CD4-positive, alpha-beta T cell (primary cell): ENCODE measurements at regions of chr16 and their contacts with region 1.

Region 1: GRCh38 chr16:29995911-29996772 is at the start of gene INO80E:
- DNase-seq: peak; percentile 97 to 100 (median 99)
- ATAC-seq: peak; percentile 95
- H3K4me3 ChIP-seq: peak within 1 kb of the TSS; percentile 83
- H3K4me3 Mint-ChIP-seq: peak within 1 kb of the TSS; percentile 98
- H3K27ac ChIP-seq: peak within 1 kb of the TSS; percentile 98
- H3K27ac Mint-ChIP-seq: peak within 1 kb of the TSS; percentile 99
- H3K4me1 ChIP-seq: peaks cover 30% of the 10 kb centered on the region
- H3K4me1 Mint-ChIP-seq: peaks cover 33% of the 10 kb centered on the region
- H3K27me3 ChIP-seq: no peaks in the 10 kb centered on the region
- H3K27me3 Mint-ChIP-seq: no peaks in the 10 kb centered on the region
- CTCF ChIP-seq: no peak
- total RNA-seq, gene INO80E: 54.6 to 57.6 TPM

Region 2: DNA sequence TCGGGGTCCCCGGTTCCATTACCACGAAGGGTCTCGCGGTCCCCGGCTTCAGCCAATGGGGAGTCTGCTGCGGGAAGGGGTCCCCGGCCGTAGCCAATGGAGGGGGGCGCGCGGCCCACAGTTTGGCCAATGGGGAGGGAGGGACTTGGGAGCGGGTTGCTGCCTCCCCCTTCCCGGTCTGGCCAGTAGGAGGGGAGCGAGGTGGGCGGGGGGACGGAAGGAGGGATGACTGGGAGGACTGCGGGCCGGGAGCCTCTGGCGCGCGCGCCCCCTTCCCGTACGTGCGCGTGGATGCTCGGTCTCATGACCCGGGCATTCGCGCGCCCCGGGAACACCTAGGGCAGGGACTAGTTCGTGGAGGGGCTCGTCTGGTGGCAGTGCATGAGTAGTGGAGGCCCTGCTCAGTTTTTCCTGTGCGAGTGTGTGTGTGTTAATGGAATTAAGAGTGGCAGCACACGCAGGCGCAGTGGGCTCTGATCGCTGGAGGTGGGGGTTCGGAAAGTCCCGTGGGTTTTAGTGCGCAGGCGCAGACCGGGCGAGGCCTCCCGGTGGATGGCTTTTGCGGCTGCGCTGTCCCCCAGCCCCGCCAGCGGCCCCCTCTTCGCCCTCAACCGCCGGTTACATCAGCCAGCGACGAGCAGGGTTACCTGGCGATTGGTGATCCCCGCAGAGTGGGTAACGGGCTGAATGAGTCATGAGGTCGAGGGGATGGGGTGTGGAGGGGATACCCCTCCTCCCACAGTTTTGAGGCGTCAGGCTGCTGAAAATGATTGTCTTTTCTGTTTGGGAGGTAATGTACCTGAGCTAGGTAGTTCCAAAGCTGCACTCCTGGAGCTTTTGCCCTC is 1172.0 kb before region 1 on chr16:
- CTCF ChIA-PET with region 1: no interaction called
- POLR2A ChIA-PET with region 1: no interaction called
- intact Hi-C with region 1: loop called in 1 of 2 experiments (anchors 10 kb)
- DNase-seq: peak; percentile 88 to 98 (median 94)
- ATAC-seq: peak; percentile 60
- H3K4me3 ChIP-seq: peak overlapping the region; percentile 90
- H3K4me3 Mint-ChIP-seq: peak overlapping the region; percentile 100
- H3K27ac ChIP-seq: peak overlapping the region; percentile 95 to 98
- H3K27ac Mint-ChIP-seq: peak overlapping the region; percentile 99
- H3K4me1 ChIP-seq: peaks cover 31% of the 10 kb centered on the region
- H3K4me1 Mint-ChIP-seq: peaks cover 50% of the 10 kb centered on the region
- H3K27me3 ChIP-seq: no peaks in the 10 kb centered on the region
- H3K27me3 Mint-ChIP-seq: no peaks in the 10 kb centered on the region
- CTCF ChIP-seq: peak; percentile 13

Region 3: DNA sequence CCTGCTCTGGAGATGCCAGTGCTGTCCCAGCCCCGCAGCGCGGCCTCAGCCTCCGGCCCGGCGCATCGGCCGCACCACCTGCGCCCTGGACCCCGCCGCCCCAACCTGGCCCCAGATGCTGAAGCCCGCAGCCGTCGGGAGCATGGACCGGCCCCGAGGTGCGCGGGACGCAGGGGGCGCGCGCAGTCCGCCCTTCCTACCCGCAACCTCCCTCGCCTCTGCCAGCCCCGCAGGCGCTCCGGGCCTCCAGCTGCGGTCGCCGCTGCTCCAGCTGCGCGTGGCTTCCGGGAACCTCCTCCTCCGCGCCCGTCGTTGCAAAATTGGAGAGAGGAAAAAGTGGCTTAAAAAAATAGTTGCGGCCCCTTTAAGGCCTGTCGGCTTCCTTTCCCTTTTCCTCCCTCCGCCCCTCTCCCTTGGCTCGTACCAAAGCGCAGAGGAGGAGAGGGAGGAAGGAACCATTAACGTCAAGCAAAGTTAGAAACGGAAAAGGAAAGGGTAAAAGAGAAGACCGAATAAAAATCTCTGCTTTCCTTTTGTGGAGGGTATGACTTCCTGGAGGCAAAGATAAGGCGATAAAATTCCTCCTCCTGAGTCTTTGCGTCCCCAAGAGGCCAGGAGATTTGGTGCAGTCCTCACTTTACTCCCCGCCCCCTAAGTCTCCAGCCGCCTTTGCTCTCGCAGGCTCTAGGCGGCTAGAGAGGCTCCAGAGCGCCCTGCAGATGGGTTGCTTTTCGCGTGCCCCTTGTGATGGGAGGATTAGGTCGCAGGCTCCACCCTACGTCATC is 133.1 kb before region 1 on chr16 and contains the start of gene CDIPT:
- CTCF ChIA-PET with region 1: no interaction called
- POLR2A ChIA-PET with region 1: no interaction called
- intact Hi-C with region 1: loop called (anchors 1 to 5 kb)
- DNase-seq: peak; percentile 85 to 98 (median 90)
- ATAC-seq: peak; percentile 96
- H3K4me3 ChIP-seq: peak within 1 kb of the TSS; percentile 76
- H3K4me3 Mint-ChIP-seq: peak within 1 kb of the TSS; percentile 95
- H3K27ac ChIP-seq: peak within 1 kb of the TSS; percentile 87 to 97
- H3K27ac Mint-ChIP-seq: peak within 1 kb of the TSS; percentile 95
- H3K4me1 ChIP-seq: peaks cover 30% of the 10 kb centered on the region
- H3K4me1 Mint-ChIP-seq: peaks cover 22% of the 10 kb centered on the region
- H3K27me3 ChIP-seq: no peaks in the 10 kb centered on the region
- H3K27me3 Mint-ChIP-seq: no peaks in the 10 kb centered on the region
- CTCF ChIP-seq: peak; percentile 70
- total RNA-seq, gene CDIPT: 25.7 to 27.0 TPM

Region 4: GRCh38 chr16:29926005-29926710 is 70.0 kb before region 1 on chr16 and contains the start of gene KCTD13:
- CTCF ChIA-PET with region 1: no interaction called
- POLR2A ChIA-PET with region 1: interaction called, 18 read pairs
- intact Hi-C with region 1: loop called (anchors 2 kb)
- DNase-seq: peak; percentile 75 to 94 (median 86)
- ATAC-seq: peak; percentile 89
- H3K4me3 ChIP-seq: peak within 1 kb of the TSS; percentile 74
- H3K4me3 Mint-ChIP-seq: peak within 1 kb of the TSS; percentile 95
- H3K27ac ChIP-seq: peak within 1 kb of the TSS; percentile 42 to 72
- H3K27ac Mint-ChIP-seq: peak within 1 kb of the TSS; percentile 93
- H3K4me1 ChIP-seq: peaks cover 30% of the 10 kb centered on the region
- H3K4me1 Mint-ChIP-seq: peaks cover 38% of the 10 kb centered on the region
- H3K27me3 ChIP-seq: no peaks in the 10 kb centered on the region
- H3K27me3 Mint-ChIP-seq: no peaks in the 10 kb centered on the region
- CTCF ChIP-seq: no peak
- total RNA-seq, gene KCTD13: 40.0 to 43.8 TPM

Region 5: DNA sequence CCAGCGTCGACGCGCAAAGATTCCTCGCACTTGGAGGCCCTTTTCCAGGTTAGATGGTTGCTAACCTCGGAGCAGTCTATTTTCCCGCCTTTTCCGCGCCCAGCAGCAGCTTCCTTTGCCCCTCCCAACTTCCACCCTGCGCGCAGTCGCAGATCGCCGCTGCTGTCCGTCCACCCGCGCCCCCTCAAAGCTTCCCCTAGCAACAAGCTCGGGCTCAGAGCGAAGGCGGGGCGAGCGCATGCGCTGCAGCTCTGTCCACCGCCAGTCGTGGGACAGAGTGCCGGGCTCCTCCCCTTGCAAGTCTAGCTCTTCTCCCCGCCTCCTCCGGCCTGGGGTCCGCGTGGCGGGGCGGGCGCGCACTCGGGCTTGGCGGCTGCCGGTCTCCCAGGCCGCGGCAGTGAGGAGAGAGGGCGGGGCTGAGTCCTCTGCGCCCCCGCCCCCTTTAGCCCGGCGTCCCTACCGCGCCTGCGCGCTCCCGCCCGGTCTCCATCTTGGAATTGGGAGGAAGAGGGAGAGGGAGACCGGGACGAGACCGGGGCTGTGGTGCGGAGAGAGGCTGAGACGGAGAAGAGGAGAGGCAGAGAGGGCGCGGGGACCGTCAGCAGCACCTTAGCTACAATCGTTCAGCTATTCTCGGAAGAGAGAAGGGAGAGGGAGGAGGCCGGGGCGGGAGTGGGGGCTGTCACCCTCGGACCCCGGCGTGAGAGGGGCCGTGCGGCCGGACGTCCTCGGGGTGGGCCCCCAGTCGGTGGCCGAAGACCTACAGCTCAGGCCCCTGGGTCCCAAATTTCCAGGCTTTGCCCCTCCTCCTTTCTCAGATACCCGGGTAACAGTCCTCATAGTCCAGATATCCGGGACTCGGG is 22.5 kb before region 1 on chr16 and contains the start of gene TAOK2:
- CTCF ChIA-PET with region 1: no interaction called
- POLR2A ChIA-PET with region 1: interaction called, 18 read pairs
- intact Hi-C with region 1: loop called (anchors 1 kb)
- DNase-seq: peak; percentile 76 to 98 (median 90)
- ATAC-seq: peak; percentile 87
- H3K4me3 ChIP-seq: peak within 1 kb of the TSS; percentile 99
- H3K4me3 Mint-ChIP-seq: peak within 1 kb of the TSS; percentile 98
- H3K27ac ChIP-seq: peak within 1 kb of the TSS; percentile 70 to 83
- H3K27ac Mint-ChIP-seq: peak within 1 kb of the TSS; percentile 84
- H3K4me1 ChIP-seq: peaks cover 39% of the 10 kb centered on the region
- H3K4me1 Mint-ChIP-seq: peaks cover 50% of the 10 kb centered on the region
- H3K27me3 ChIP-seq: no peaks in the 10 kb centered on the region
- H3K27me3 Mint-ChIP-seq: no peaks in the 10 kb centered on the region
- CTCF ChIP-seq: no peak
- total RNA-seq, gene TAOK2: 13.1 to 14.1 TPM

Region 6: DNA sequence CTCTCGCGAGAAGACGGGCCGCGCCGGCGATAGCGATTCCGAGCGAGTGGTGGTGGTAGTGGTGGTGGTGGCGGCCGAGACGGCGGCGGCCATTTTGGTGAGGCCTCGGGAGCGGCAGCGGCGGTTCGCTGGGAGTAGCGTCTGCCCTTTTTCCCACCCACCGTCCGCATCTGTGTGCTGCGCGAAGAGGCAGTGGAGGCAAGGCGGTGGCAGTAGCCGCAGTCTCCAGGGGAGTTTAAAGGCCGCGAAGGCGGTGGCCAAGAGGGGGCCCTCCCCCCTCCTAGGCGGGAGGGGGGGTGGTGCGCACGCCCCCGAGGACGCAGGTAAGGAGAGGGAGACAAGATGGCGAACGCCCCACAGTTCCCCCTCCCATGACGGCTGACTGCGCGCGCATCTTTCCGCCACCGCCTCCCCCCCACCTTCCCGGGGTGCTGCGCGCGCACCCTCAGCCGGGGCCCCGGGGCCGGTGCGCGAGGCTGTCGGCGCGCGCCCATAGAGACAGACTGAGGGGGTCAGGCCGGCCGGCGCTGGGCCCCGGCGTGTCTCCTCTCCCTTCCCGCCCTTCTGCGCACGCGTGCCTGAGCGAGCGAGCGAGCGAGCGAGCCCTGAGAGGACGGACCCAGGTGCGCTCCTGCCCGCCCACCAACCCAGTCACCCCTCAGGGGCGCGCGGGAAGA is 702.1 kb after region 1 on chr16:
- CTCF ChIA-PET with region 1: no interaction called
- POLR2A ChIA-PET with region 1: no interaction called
- intact Hi-C with region 1: loop called in 1 of 2 experiments (anchors 10 kb)
- DNase-seq: peak; percentile 97 to 100 (median 99)
- ATAC-seq: peak; percentile 75
- H3K4me3 ChIP-seq: peak overlapping the region; percentile 97
- H3K4me3 Mint-ChIP-seq: peak overlapping the region; percentile 98
- H3K27ac ChIP-seq: peak overlapping the region; percentile 100
- H3K27ac Mint-ChIP-seq: peak overlapping the region; percentile 100
- H3K4me1 ChIP-seq: peaks cover 38% of the 10 kb centered on the region
- H3K4me1 Mint-ChIP-seq: peaks cover 37% of the 10 kb centered on the region
- H3K27me3 ChIP-seq: no peaks in the 10 kb centered on the region
- H3K27me3 Mint-ChIP-seq: no peaks in the 10 kb centered on the region
- CTCF ChIP-seq: no peak